Spleen (tissue), 13 donors: ENCODE measurements at regions of chr2 and their contacts with region 1.

Region 1: GRCh38 chr2:146068051-146068450 is 1548.1 kb upstream of the ZEB2 start:
- DNase-seq: no peak
- H3K4me3 ChIP-seq: no peak overlapping the region
- H3K27ac ChIP-seq: no peak overlapping the region
- H3K4me1 ChIP-seq: no peaks in the 10 kb centered on the region
- H3K27me3 ChIP-seq: no peaks in the 10 kb centered on the region
- CTCF ChIP-seq: no peak
- POLR2A ChIP-seq: no peak

Region 2: GRCh38 chr2:145203891-145204290 is 864.2 kb before region 1 on chr2:
- intact Hi-C with region 1: no loop called
- DNase-seq: no peak
- H3K4me3 ChIP-seq: no peak overlapping the region
- H3K27ac ChIP-seq: no peak overlapping the region
- H3K4me1 ChIP-seq: peaks cover 0 to 9% (median 0%) of the 10 kb centered on the region in 6 donors
- H3K27me3 ChIP-seq: no peaks in the 10 kb centered on the region
- CTCF ChIP-seq: no peak
- POLR2A ChIP-seq: no peak

Region 3: GRCh38 chr2:146189541-146189940 is 121.5 kb after region 1 on chr2:
- intact Hi-C with region 1: loop called (anchors 10 kb)
- DNase-seq: no peak
- H3K4me3 ChIP-seq: no peak overlapping the region
- H3K27ac ChIP-seq: no peak overlapping the region
- H3K4me1 ChIP-seq: no peaks in the 10 kb centered on the region
- H3K27me3 ChIP-seq: no peaks in the 10 kb centered on the region
- CTCF ChIP-seq: no peak
- POLR2A ChIP-seq: no peak

Region 4: DNA sequence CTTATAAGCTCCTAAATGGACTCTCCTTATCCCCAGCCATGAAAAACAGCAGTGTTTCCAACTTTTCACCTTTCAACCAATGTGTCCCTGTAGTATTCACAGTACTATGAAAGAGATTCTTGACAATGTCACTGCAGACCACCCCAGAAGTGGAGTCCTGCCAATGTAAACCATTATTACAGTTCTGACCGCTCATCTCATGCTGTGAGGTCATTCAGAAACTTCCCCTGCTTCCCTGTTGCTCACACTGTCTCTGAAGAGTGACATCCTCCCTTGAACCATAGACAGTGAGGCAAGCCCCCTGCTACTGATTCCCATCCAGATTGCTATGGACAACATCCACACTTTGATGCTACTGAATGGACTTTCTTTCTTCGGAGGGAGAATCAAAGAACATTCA is 253.1 kb after region 1 on chr2:
- intact Hi-C with region 1: no loop called
- DNase-seq: no peak
- H3K4me3 ChIP-seq: no peak overlapping the region
- H3K27ac ChIP-seq: no peak overlapping the region
- H3K4me1 ChIP-seq: no peaks in the 10 kb centered on the region
- H3K27me3 ChIP-seq: no peaks in the 10 kb centered on the region
- CTCF ChIP-seq: no peak
- POLR2A ChIP-seq: no peak